ENCODE measurements at regions of chr11 and their contacts with region 1.

Region 1: DNA sequence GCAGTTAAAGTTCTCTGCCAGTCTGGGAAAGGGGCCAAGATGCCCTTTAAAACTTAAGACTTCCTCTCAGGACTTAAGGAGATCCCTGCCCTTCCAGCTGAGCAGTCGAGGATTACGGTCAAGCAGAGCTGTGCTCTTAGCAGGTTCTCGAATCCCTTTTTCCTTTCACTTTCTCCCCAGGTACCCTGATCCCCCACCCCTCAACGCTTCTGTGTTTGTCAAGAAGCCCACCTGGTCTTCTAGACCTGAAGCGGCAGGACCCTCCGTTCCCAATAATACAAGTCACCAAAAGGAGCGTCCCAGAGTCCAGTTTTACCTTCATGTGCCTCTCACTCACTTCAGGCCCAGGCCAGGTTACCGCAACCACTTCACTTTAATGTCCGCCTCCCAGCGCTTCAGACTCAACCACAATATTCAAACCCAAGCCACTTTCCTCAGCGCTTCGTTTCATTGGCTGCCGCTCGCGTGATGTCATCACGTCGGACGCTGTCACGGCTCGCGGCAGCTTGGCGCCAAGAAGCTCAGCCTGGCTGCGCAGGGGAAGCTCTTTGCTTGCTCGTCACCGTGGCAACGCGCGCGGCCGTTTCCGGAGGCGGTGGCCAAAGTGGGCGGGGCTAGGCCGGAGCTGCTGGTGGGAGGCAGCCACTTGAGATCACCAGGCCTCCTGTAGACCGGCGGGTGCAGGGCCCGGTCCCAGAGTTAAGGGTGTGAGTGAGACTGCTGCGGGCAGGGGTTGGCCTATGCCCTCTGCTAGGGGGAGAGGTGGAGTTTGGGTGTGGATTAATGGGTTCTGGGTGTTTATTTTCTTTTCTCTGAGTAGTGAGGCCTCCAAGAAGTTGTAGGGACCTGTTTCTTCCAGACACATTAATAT is at the starts of genes KIF18A and METTL15:
- DNase-seq: peak; percentile 94 to 99 (median 98)
- ATAC-seq: peak; percentile 88
- H3K4me3 ChIP-seq: peak within 1 kb of the TSS; percentile 71 to 73
- H3K4me3 Mint-ChIP-seq: peak within 1 kb of the TSS; percentile 90
- H3K27ac ChIP-seq: peak within 1 kb of the TSS; percentile 87 to 88
- H3K27ac Mint-ChIP-seq: peak within 1 kb of the TSS; percentile 98
- H3K4me1 ChIP-seq: peaks cover 40% of the 10 kb centered on the region
- H3K4me1 Mint-ChIP-seq: peaks cover 55% of the 10 kb centered on the region
- H3K27me3 ChIP-seq: no peaks in the 10 kb centered on the region
- H3K27me3 Mint-ChIP-seq: no peaks in the 10 kb centered on the region
- CTCF ChIP-seq: no peak
- total RNA-seq, gene KIF18A: 1.5 to 2.6 TPM
- total RNA-seq, gene METTL15: 2.8 to 3.7 TPM

Region 2: GRCh38 chr11:27362749-27363575 is 745.0 kb before region 1 on chr11 and contains the start of gene CCDC34:
- CTCF ChIA-PET with region 1: no interaction called
- POLR2A ChIA-PET with region 1: no interaction called
- intact Hi-C with region 1: loop called (anchors 5 kb)
- DNase-seq: peak; percentile 72 to 96 (median 87)
- ATAC-seq: peak; percentile 98
- H3K4me3 ChIP-seq: peak within 1 kb of the TSS; percentile 84 to 97
- H3K4me3 Mint-ChIP-seq: peak within 1 kb of the TSS; percentile 93
- H3K27ac ChIP-seq: peak within 1 kb of the TSS; percentile 36 to 46
- H3K27ac Mint-ChIP-seq: peak within 1 kb of the TSS; percentile 89
- H3K4me1 ChIP-seq: peaks cover 12% of the 10 kb centered on the region
- H3K4me1 Mint-ChIP-seq: peaks cover 32% of the 10 kb centered on the region
- H3K27me3 ChIP-seq: no peaks in the 10 kb centered on the region
- H3K27me3 Mint-ChIP-seq: no peaks in the 10 kb centered on the region
- CTCF ChIP-seq: no peak
- total RNA-seq, gene CCDC34: 0.89 to 1.1 TPM

Measured in CD8-positive, alpha-beta T cell (primary cell).